ENCODE measurements at regions of chr11 and their contacts with region 1.

Region 1: DNA sequence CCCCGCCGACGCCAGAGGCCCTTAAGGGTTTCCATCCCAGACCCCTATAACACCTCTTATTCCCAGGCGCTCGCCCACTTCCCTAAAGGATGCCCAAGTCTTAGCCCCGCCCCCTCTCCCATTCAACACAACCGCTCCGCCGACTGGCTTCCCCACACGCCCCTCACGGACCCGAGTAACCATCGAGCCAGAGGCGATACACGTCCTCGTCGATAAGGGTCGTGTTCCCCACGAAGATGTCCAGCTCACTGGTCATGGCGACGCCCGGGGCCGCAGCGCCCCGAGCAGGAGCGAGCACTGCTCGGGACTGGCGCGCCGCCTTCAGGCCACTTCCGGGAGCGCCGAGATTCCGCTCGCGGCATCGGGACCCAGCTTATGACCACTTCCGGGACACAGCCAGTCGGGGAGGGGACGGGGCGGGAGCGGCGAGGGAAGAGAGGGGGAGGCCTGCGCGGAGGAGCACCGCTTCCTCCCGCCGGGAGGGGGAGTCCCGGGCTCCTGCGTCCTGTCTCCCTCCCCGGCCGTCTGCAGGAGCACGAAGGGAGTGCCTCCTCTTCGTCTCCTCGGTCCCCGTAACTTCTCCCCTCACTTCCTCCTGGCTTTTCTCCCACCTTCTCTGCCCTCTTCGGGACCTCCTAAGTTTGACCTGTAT is at the start of gene FIBP:
- DNase-seq: peak; percentile 98
- ATAC-seq: peak; percentile 62
- H3K4me3 Mint-ChIP-seq: peak within 1 kb of the TSS; percentile 98
- H3K27ac Mint-ChIP-seq: peak within 1 kb of the TSS; percentile 96
- H3K4me1 Mint-ChIP-seq: peaks cover 70% of the 10 kb centered on the region
- H3K27me3 Mint-ChIP-seq: no peaks in the 10 kb centered on the region
- total RNA-seq, gene FIBP: 80.4 to 89.0 TPM

Region 2: DNA sequence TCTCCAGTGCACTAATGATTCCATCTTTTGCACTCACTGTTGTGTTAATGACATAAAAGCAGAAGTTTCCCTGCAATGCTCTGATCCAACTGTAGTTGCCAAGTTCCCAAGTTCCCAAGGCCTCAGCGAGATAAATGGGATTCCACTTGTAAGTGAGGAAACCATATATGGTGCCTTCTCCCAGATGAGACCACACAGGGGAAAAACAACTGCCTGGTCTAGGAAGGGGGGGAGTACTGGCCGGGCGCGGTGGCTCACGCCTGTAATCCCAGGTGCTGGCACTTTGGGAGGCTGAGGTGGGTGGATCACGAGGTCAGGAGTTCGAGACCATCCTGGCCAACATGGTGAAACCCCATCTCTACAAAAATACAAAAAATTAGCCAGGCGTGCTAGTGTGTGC is 202.3 kb before region 1 on chr11:
- CTCF ChIA-PET with region 1: no interaction called
- POLR2A ChIA-PET with region 1: no interaction called
- DNase-seq: no peak
- ATAC-seq: no peak
- H3K4me3 Mint-ChIP-seq: no peak overlapping the region
- H3K27ac Mint-ChIP-seq: no peak overlapping the region
- H3K4me1 Mint-ChIP-seq: no peaks in the 10 kb centered on the region
- H3K27me3 Mint-ChIP-seq: peaks cover 11% of the 10 kb centered on the region

Region 3: GRCh38 chr11:65711785-65712632 is 176.3 kb before region 1 on chr11 and contains the start of gene KAT5:
- CTCF ChIA-PET with region 1: interaction called, 38 read pairs
- POLR2A ChIA-PET with region 1: interaction called, 8 read pairs
- DNase-seq: peak; percentile 99
- ATAC-seq: peak; percentile 86
- H3K4me3 Mint-ChIP-seq: peak within 1 kb of the TSS; percentile 85
- H3K27ac Mint-ChIP-seq: peak within 1 kb of the TSS; percentile 99
- H3K4me1 Mint-ChIP-seq: peaks cover 30% of the 10 kb centered on the region
- H3K27me3 Mint-ChIP-seq: no peaks in the 10 kb centered on the region
- total RNA-seq, gene KAT5: 63.2 to 68.7 TPM

Region 4: GRCh38 chr11:65766535-65766934 is 121.8 kb before region 1 on chr11:
- CTCF ChIA-PET with region 1: no interaction called
- POLR2A ChIA-PET with region 1: no interaction called
- DNase-seq: peak; percentile 9
- ATAC-seq: no peak
- H3K4me3 Mint-ChIP-seq: no peak overlapping the region
- H3K27ac Mint-ChIP-seq: no peak overlapping the region
- H3K4me1 Mint-ChIP-seq: peaks cover 6% of the 10 kb centered on the region
- H3K27me3 Mint-ChIP-seq: peaks cover 1% of the 10 kb centered on the region

Region 5: DNA sequence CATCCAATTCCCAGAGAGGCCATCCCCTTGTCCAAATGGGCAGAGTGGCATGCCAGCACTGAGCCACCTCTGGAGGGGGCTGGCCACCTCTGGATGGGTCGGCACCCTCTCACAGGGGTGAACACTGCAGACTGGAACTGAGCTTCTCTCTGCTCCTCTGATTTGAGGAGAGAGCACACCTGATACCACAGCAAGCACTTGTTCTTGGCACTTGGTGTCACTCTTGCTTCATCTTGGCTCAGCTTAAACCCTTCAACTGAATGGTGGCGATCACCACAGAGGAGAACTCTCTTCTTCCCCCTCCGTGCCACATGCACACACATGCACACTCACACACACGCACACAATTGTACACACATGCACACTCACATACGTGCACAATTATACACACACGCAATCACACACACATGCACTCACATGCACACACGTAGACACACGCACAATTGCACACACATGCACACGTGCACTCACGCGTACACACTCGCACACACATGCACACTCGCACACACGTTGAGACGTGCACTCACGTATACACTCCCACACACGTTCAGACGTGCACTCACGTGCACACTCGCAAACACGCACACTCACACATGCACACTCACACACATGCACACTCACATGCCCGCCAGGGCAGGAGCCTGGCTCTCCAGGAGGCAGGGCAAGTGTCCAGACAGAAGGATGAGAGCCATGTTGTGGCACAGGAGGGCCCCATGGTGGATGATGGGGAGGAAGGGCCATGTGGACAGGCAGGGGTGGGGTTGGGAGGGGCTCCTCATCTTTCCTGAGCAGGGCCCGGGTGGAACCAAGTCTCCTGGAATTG is 78.0 kb before region 1 on chr11:
- CTCF ChIA-PET with region 1: no interaction called
- POLR2A ChIA-PET with region 1: no interaction called
- DNase-seq: no peak
- ATAC-seq: peak; percentile 53
- H3K4me3 Mint-ChIP-seq: no peak overlapping the region
- H3K27ac Mint-ChIP-seq: no peak overlapping the region
- H3K4me1 Mint-ChIP-seq: no peaks in the 10 kb centered on the region
- H3K27me3 Mint-ChIP-seq: peaks cover 20% of the 10 kb centered on the region

Region 6: DNA sequence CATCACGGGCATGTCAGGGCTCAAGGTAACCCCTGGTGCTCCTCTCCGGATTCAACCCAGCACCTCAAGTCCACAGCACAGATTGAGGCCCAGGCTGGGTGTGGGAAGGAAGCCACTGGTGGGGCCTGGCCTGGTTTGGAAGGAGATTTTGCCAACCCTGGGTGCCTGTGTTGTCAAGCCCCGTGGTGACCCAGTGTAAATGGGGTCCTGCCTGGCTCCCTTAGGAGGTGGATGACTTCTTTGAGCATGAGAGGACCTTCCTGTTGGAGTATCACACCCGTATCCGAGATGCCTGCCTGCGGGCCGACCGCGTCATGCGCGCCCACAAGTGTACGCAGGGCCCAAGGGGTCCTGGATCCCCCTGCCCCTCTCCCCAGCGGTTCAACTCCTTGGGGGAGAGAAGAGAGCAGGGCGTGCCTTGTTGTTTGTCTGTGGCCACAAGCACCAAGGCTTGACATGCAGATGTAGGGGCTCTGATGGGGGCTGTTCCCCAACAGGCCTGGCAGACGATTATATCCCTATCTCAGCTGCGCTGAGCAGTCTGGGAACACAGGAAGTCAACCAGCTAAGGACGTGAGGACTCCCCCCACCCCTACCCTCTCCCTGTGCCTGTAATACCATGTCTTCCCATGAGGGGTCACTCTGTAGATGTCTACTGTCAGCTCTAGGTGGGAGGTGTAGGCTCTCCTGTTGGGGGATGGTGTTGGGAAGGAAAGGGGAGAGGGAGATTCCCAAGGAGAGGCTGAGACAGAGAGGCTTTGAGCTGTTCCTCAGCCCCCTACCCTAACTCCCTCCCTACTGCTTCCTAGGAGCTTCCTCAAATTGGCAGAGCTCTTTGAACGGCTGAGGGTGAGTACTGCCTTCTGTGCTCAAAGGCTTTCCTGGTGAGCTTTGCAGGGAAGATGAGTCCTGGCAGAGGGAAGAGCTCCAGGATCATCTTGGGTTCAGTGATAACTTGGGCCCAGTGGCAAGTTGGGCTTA is 37.2 kb before region 1 on chr11:
- CTCF ChIA-PET with region 1: interaction called, 11 read pairs
- POLR2A ChIA-PET with region 1: interaction called, 305 read pairs
- DNase-seq: peak; percentile 54
- ATAC-seq: peak; percentile 20
- H3K4me3 Mint-ChIP-seq: no peak overlapping the region
- H3K27ac Mint-ChIP-seq: no peak overlapping the region
- H3K4me1 Mint-ChIP-seq: peaks cover 29% of the 10 kb centered on the region
- H3K27me3 Mint-ChIP-seq: no peaks in the 10 kb centered on the region

Region 7: GRCh38 chr11:65900125-65900898 is 12.0 kb after region 1 on chr11 and contains the start of gene FOSL1:
- CTCF ChIA-PET with region 1: interaction called, 55 read pairs
- POLR2A ChIA-PET with region 1: interaction called, 64 read pairs
- DNase-seq: peak; percentile 94
- ATAC-seq: peak; percentile 88
- H3K4me3 Mint-ChIP-seq: peak within 1 kb of the TSS; percentile 66
- H3K27ac Mint-ChIP-seq: peak within 1 kb of the TSS; percentile 71
- H3K4me1 Mint-ChIP-seq: peaks cover 59% of the 10 kb centered on the region
- H3K27me3 Mint-ChIP-seq: no peaks in the 10 kb centered on the region
- total RNA-seq, gene FOSL1: 2.3 to 3.8 TPM

Region 8: GRCh38 chr11:65919146-65920033 is 31.1 kb after region 1 on chr11 and contains the start of gene DRAP1:
- CTCF ChIA-PET with region 1: interaction called, 22 read pairs
- POLR2A ChIA-PET with region 1: interaction called, 18 read pairs
- DNase-seq: peak; percentile 99
- ATAC-seq: peak; percentile 95
- H3K4me3 Mint-ChIP-seq: peak within 1 kb of the TSS; percentile 94
- H3K27ac Mint-ChIP-seq: peak within 1 kb of the TSS; percentile 91
- H3K4me1 Mint-ChIP-seq: peaks cover 44% of the 10 kb centered on the region
- H3K27me3 Mint-ChIP-seq: no peaks in the 10 kb centered on the region
- total RNA-seq, gene DRAP1: 219 to 240 TPM

Region 9: GRCh38 chr11:65972116-65972515 is 83.8 kb after region 1 on chr11:
- CTCF ChIA-PET with region 1: interaction called, 15 read pairs
- POLR2A ChIA-PET with region 1: interaction called, 3 read pairs
- DNase-seq: no peak
- ATAC-seq: no peak
- H3K4me3 Mint-ChIP-seq: no peak overlapping the region
- H3K27ac Mint-ChIP-seq: no peak overlapping the region
- H3K4me1 Mint-ChIP-seq: peaks cover 3% of the 10 kb centered on the region
- H3K27me3 Mint-ChIP-seq: no peaks in the 10 kb centered on the region

Region 10: DNA sequence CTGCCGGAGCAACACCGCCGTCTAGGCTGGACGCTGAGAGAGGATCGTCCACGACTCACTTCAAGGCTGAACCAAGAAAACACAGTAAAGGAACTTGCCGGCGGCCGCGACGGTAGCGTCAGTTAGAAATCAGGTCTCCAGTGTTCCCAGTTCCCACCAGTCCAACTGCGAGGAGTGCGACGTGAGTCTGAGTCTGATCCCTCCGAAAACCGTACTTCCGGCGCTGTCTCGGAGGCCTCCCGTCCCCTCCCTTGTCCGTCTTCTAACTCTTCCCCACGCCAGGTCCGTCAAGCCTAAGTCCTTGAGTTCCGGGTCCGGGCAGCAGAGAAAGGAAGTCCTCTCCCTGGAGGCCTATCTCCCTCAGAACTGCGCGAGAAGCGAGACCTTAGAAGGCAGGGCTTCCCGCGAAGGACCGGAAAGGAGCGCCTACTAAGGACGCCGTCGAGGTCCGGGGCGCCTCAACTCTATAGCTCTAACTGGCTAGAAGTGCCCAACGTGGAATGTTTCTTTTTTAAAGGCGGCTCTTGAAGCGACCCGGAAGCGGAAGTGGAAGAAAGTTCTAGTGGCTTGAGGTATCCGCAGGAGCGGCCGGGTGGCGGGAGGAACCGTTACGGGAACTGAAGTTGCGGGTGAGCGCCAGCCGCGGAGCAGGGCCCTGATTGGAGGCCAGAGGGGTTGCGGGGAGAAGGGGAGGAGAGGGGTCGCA is 113.8 kb after region 1 on chr11 and contains the starts of genes BANF1 and EIF1AD:
- CTCF ChIA-PET with region 1: interaction called, 15 read pairs
- POLR2A ChIA-PET with region 1: interaction called, 7 read pairs
- DNase-seq: peak; percentile 97
- ATAC-seq: peak; percentile 95
- H3K4me3 Mint-ChIP-seq: peak within 1 kb of the TSS; percentile 96
- H3K27ac Mint-ChIP-seq: peak within 1 kb of the TSS; percentile 98
- H3K4me1 Mint-ChIP-seq: peaks cover 46% of the 10 kb centered on the region
- H3K27me3 Mint-ChIP-seq: no peaks in the 10 kb centered on the region
- total RNA-seq, gene BANF1: 290 to 298 TPM
- total RNA-seq, gene EIF1AD: 53.5 to 54.2 TPM

Region 11: GRCh38 chr11:66112601-66113098 is 224.4 kb after region 1 on chr11:
- CTCF ChIA-PET with region 1: no interaction called
- POLR2A ChIA-PET with region 1: no interaction called
- DNase-seq: no peak
- ATAC-seq: no peak
- H3K4me3 Mint-ChIP-seq: peak overlapping the region; percentile 2
- H3K27ac Mint-ChIP-seq: peak overlapping the region; percentile 61
- H3K4me1 Mint-ChIP-seq: peaks cover 89% of the 10 kb centered on the region
- H3K27me3 Mint-ChIP-seq: no peaks in the 10 kb centered on the region